T-cell (primary cell): ENCODE measurements at regions of chr15 and their contacts with region 1.

Region 1: GRCh38 chr15:34241372-34242330 is 16.8 kb downstream of the EMC4 start:
- DNase-seq: peak in 23 of 35 experiments; percentile 7 to 73 (median 21)
- ATAC-seq: peak; percentile 74 to 88 (median 80)
- H3K4me3 ChIP-seq: no peak overlapping the region
- H3K4me3 Mint-ChIP-seq: no peak overlapping the region
- H3K27ac ChIP-seq: no peak overlapping the region
- H3K27ac Mint-ChIP-seq: peak overlapping the region in 1 of 2 donors; percentile 61
- H3K4me1 ChIP-seq: no peaks in the 10 kb centered on the region
- H3K4me1 Mint-ChIP-seq: peaks cover 0 to 11% (median 10%) of the 10 kb centered on the region in 3 donors
- H3K27me3 ChIP-seq: no peaks in the 10 kb centered on the region
- H3K27me3 Mint-ChIP-seq: no peaks in the 10 kb centered on the region

Region 2: DNA sequence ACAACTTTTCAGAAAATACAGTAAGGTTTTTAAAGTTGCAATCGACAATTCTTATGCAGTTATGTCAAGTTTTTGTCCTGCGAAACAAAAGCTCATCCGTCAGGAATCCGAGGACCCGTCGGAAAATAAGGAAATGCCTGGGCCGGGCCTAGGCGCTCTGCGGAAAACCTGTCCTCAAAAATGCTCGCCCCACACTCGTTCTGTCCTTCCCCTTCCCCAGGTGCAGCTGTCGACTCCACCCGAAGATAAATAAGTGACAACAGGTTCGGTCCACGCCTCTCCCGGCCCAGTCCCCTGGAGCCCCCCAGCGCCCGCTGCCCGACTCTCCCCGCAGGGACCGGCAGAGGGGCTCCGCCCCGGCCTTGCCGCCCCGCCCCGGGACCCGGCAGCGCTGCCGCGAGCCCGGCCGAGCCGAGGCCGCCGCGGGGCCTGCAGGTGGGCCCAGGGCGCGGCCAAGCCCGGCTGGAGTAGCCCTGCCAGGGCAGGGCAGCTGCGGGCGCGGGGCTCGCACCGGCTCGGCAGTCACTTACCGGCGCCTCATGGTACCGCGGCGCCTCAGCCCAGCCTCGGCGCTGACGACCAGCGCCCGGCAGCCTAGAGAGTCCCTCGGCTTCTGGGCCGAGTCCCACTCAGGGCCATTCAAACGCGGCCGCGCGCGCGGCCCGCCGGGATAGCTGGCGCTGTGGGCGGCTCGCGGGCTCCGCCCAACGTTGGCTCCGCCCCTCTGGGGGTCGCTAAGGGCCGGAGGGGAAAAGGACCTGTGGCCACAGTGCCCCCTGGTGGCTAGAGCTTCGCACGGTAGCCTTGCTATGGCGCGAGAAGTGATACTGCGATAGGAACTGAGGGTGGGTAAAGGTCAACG is 32.0 kb before region 1 on chr15 and contains the start of gene KATNBL1:
- CTCF ChIA-PET with region 1: no interaction called
- POLR2A ChIA-PET with region 1: no interaction called
- DNase-seq: peak; percentile 83 to 97 (median 93)
- ATAC-seq: peak; percentile 92 to 97 (median 95)
- H3K4me3 ChIP-seq: peak within 1 kb of the TSS; percentile 63 to 68
- H3K4me3 Mint-ChIP-seq: peak within 1 kb of the TSS; percentile 81 to 90 (median 88)
- H3K27ac ChIP-seq: peak within 1 kb of the TSS; percentile 25
- H3K27ac Mint-ChIP-seq: peak within 1 kb of the TSS; percentile 61 to 79
- H3K4me1 ChIP-seq: peaks cover 3 to 8% of the 10 kb centered on the region in 2 experiments
- H3K4me1 Mint-ChIP-seq: peaks cover 21 to 26% (median 22%) of the 10 kb centered on the region in 3 donors
- H3K27me3 ChIP-seq: no peaks in the 10 kb centered on the region
- H3K27me3 Mint-ChIP-seq: no peaks in the 10 kb centered on the region
- total RNA-seq, gene KATNBL1: 27.1 to 37.3 (median 29.5) TPM

Region 3: DNA sequence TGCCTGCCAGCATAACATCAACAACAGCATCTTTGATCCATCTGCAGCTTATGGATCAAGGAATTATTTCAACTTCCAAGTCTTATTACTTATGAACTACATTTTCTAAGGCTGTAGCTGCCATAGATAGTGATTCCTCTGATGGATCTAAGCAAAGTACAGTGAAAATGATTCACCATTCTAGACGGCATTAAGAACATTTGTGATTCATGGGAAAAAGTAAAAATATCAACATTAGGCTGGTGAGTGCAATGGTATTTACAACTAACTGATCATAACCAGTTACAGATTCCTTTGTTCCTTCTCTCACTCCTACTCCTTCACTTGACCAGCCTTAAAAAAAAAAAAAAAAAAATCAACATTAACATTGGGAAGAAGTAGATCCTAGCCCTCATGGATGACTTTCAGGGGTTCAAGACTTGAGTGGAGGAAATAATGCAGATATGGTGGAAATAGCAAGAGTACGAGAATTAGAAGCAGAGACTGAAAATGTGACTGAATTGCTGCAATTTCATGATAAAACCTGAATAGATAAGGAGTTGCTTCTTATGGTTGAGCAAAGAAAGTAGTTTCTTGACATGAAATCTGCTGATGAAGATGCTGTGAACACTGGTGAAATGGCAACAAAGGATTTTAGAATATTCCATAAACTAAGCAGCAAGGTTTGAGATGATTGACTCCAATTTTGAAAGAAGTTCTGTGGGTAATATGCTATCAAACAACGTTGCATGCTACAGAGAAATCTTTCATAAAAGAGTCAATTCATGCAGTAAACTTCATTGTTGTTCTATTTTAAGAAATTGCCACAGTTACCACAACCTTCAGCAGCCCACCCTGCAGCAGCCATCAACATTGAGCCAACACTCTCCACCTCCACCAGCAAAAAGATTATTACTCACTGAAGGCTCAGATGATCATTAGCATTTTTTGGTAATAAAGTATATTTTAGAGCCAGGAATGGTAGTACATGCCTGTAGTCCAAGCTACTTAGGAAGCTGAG is 73.1 kb after region 1 on chr15:
- CTCF ChIA-PET with region 1: no interaction called
- POLR2A ChIA-PET with region 1: no interaction called
- DNase-seq: no peak
- ATAC-seq: no peak
- H3K4me3 ChIP-seq: no peak overlapping the region
- H3K4me3 Mint-ChIP-seq: peak overlapping the region in 2 of 3 donors; percentile 43 to 51
- H3K27ac ChIP-seq: no peak overlapping the region
- H3K27ac Mint-ChIP-seq: peak overlapping the region; percentile 19 to 48
- H3K4me1 ChIP-seq: peaks cover 13 to 23% of the 10 kb centered on the region in 2 experiments
- H3K4me1 Mint-ChIP-seq: peaks cover 65 to 66% (median 66%) of the 10 kb centered on the region in 3 donors
- H3K27me3 ChIP-seq: no peaks in the 10 kb centered on the region
- H3K27me3 Mint-ChIP-seq: no peaks in the 10 kb centered on the region

Region 4: GRCh38 chr15:34327906-34328305 is 86.3 kb after region 1 on chr15:
- CTCF ChIA-PET with region 1: interaction called, 5 to 12 read pairs
- POLR2A ChIA-PET with region 1: interaction called in 1 of 2 experiments, 3 read pairs
- DNase-seq: no peak
- ATAC-seq: peak in 1 of 4 experiments; percentile 27
- H3K4me3 ChIP-seq: peak overlapping the region in 1 of 2 donors; percentile 18
- H3K4me3 Mint-ChIP-seq: peak overlapping the region; percentile 32 to 61 (median 56)
- H3K27ac ChIP-seq: peak overlapping the region; percentile 53
- H3K27ac Mint-ChIP-seq: peak overlapping the region; percentile 87 to 96
- H3K4me1 ChIP-seq: peaks cover 32 to 37% of the 10 kb centered on the region in 2 experiments
- H3K4me1 Mint-ChIP-seq: peaks cover 65 to 75% (median 69%) of the 10 kb centered on the region in 3 donors
- H3K27me3 ChIP-seq: no peaks in the 10 kb centered on the region
- H3K27me3 Mint-ChIP-seq: no peaks in the 10 kb centered on the region

Region 5: DNA sequence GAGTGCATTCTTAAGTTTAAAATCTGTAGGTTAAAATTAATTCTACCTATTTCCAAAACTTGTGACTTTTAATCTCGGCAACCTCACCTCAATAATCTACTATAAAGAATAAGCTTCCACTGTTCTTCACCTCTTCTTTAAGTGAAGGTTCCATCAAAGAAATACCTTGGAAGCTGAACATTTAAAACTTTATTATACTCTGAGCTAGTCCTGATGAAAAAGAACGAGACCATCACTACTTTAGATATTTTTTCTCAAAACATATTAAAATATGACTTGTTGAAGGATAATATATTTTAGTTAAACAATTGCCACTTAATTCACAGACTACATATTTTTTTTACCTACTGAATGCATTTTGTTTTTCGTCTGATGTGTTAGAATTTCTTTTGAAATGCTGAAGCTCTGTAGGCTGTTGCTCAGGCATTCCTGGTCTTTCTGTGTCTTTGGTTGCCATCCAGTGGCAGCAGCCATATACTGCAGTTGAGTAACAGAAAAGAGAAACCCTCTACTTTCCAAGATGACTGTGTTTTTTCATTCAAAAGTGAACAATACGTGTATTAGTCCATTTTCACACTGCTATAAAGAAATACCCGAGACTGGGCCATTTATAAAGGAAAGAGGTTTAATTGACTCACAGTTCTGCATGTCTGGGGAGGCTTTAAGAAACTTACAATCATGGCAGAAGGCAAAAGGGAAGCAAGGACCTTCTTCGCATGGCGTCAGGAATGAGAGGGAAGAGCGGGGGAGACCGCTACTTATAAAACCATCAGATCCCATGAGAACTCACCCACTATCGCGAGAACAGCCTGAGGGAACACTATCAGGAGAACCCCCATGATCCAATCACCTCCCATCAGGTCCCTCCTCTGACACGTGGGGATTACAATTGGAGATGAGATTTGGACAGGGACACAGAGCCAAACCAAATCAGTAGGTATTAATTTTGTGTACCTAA is 346.3 kb after region 1 on chr15:
- CTCF ChIA-PET with region 1: interaction called, 6 to 13 read pairs
- POLR2A ChIA-PET with region 1: no interaction called
- DNase-seq: peak; percentile 21 to 75 (median 52)
- ATAC-seq: peak; percentile 23 to 46 (median 39)
- H3K4me3 ChIP-seq: no peak overlapping the region
- H3K4me3 Mint-ChIP-seq: peak overlapping the region; percentile 51 to 59 (median 58)
- H3K27ac ChIP-seq: no peak overlapping the region
- H3K27ac Mint-ChIP-seq: peak overlapping the region in 1 of 2 donors; percentile 78
- H3K4me1 ChIP-seq: peaks cover 0 to 12% of the 10 kb centered on the region in 2 experiments
- H3K4me1 Mint-ChIP-seq: peaks cover 6 to 9% (median 7%) of the 10 kb centered on the region in 3 donors
- H3K27me3 ChIP-seq: peaks cover 0 to 8% of the 10 kb centered on the region in 2 experiments
- H3K27me3 Mint-ChIP-seq: peaks cover 3 to 11% of the 10 kb centered on the region in 2 donors